Activated CD4-positive, alpha-beta T cell treated with anti-CD3 and anti-CD28 coated beads, Interleukin-2, amount 10 ng/mL, durations not matched to agents 24 days and 14 days (primary cell): ENCODE measurements at regions of chr7 and their contacts with region 1.

Region 1: GRCh38 chr7:141785706-141786552 is 4.1 kb upstream of the TAS2R5 start:
- DNase-seq: peak; percentile 77
- H3K4me3 Mint-ChIP-seq: no peak overlapping the region
- H3K27ac Mint-ChIP-seq: no peak overlapping the region
- H3K4me1 Mint-ChIP-seq: no peaks in the 10 kb centered on the region
- H3K27me3 Mint-ChIP-seq: no peaks in the 10 kb centered on the region

Region 2: DNA sequence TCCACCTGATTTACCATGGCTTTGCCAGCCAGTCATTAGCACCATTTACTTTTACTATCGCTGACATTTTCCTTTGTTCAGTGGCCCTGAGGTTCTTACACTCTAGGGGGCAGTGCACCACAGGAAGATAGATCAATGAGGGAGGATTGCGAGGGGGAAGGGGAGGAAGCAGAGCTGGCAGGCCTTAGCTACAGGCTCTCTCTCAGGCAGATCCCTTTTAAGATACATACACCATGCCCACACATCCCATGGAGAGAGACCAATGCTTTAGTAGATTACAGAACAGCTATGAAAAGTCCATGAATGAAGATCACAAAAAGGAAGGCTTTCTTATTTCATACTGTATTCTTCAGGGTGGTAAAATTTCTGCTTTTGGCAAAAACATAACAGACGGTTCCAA is 131.4 kb before region 1 on chr7:
- intact Hi-C with region 1: loop called (anchors 1 kb)
- DNase-seq: peak; percentile 90
- H3K4me3 Mint-ChIP-seq: no peak overlapping the region
- H3K27ac Mint-ChIP-seq: peak overlapping the region; percentile 73
- H3K4me1 Mint-ChIP-seq: peaks cover 4% of the 10 kb centered on the region
- H3K27me3 Mint-ChIP-seq: no peaks in the 10 kb centered on the region

Region 3: DNA sequence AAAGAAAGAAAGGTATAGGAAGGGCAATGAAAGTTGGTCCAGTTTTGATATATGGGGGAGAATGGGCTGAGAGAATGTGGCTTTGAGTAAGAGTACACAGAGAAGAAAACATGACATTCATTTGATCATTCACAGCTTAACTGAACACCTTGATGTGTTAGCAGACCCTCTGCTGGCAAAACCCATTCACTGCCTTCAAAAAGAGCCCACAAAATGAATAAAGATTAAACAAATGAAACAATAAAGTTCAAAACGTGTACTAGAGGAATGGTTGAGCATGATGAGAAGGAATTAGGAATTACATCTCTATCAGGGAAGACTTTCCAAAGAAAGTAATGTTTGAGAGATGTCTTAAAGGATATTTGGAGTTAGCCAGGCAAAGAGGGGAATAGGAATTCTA is 75.6 kb before region 1 on chr7:
- intact Hi-C with region 1: no loop called
- DNase-seq: no peak
- H3K4me3 Mint-ChIP-seq: no peak overlapping the region
- H3K27ac Mint-ChIP-seq: no peak overlapping the region
- H3K4me1 Mint-ChIP-seq: peaks cover 4% of the 10 kb centered on the region
- H3K27me3 Mint-ChIP-seq: peaks cover 3% of the 10 kb centered on the region

Region 4: GRCh38 chr7:141754939-141755338 is 31.0 kb before region 1 on chr7:
- intact Hi-C with region 1: loop called (anchors 1 kb)
- DNase-seq: peak; percentile 65
- H3K4me3 Mint-ChIP-seq: no peak overlapping the region
- H3K27ac Mint-ChIP-seq: no peak overlapping the region
- H3K4me1 Mint-ChIP-seq: no peaks in the 10 kb centered on the region
- H3K27me3 Mint-ChIP-seq: no peaks in the 10 kb centered on the region